ENCODE measurements at regions of chr10 and their contacts with region 1.

Region 1: DNA sequence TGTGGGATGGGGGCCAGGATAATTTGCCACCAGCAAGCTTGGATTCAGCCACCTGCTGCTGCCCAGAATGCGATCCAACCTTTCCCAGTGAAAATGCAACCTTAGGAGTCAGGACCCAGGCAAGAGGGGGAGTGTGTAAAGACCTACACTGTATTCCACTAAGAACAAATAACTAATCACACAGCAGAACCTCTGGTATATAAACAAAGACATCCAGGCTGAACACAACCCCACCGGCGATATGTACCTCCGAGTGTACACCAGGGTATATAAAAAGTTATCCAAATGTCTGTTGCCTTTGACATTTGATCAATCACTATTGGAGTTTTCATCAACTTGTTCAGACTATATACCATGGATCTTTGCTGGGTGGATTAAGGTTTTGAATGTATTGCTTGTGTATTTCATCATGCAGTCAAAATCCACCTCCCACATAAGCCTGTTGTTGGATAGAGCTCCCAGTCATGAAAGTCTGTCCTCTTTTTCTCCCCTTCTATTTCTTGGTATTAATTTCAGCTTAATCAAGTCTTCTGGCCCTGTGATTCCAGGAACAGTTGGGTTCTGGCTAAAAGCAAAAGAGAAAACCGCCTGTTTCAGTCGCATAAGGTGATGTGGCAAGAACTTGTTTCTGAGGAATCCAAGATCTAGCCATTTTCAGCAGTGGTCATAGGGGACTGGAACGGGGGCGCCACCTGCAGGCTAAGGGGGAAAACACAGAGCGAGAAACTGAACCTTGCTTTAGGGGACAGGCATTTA is 290.7 kb downstream of the CCDC3 start:
- DNase-seq: peak; percentile 64 to 76
- ATAC-seq: peak; percentile 35 to 73 (median 62)
- H3K4me3 ChIP-seq: no peak overlapping the region
- H3K27ac ChIP-seq: peak overlapping the region in 1 of 10 donors; percentile 5
- H3K4me1 ChIP-seq: peaks cover 12 to 48% (median 35%) of the 10 kb centered on the region in 9 donors
- H3K27me3 ChIP-seq: no peaks in the 10 kb centered on the region
- CTCF ChIP-seq: peak; percentile 86 to 96 (median 92)

Region 2: GRCh38 chr10:12264204-12264940 is 446.4 kb before region 1 on chr10:
- intact Hi-C with region 1: loop called (anchors 1 to 10 kb)
- DNase-seq: peak; percentile 68 to 82
- ATAC-seq: peak; percentile 80 to 96 (median 92)
- H3K4me3 ChIP-seq: peak overlapping the region in 8 of 10 donors; percentile 14 to 51 (median 42)
- H3K27ac ChIP-seq: peak overlapping the region in 3 of 10 donors; percentile 1 to 70 (median 61)
- H3K4me1 ChIP-seq: peaks cover 0 to 32% (median 0%) of the 10 kb centered on the region in 9 donors
- H3K27me3 ChIP-seq: no peaks in the 10 kb centered on the region
- CTCF ChIP-seq: peak; percentile 79 to 95 (median 92)

Region 3: GRCh38 chr10:12484941-12485805 is 225.6 kb before region 1 on chr10:
- intact Hi-C with region 1: no loop called
- DNase-seq: peak; percentile 36 to 55
- ATAC-seq: peak; percentile 78 to 92 (median 89)
- H3K4me3 ChIP-seq: peak overlapping the region in 6 of 10 donors; percentile 6 to 29 (median 25)
- H3K27ac ChIP-seq: peak overlapping the region in 8 of 10 donors; percentile 9 to 78 (median 51)
- H3K4me1 ChIP-seq: peaks cover 0 to 27% (median 12%) of the 10 kb centered on the region in 9 donors
- H3K27me3 ChIP-seq: no peaks in the 10 kb centered on the region
- CTCF ChIP-seq: peak in 3 of 9 donors; percentile 13 to 22 (median 22)

Region 4: DNA sequence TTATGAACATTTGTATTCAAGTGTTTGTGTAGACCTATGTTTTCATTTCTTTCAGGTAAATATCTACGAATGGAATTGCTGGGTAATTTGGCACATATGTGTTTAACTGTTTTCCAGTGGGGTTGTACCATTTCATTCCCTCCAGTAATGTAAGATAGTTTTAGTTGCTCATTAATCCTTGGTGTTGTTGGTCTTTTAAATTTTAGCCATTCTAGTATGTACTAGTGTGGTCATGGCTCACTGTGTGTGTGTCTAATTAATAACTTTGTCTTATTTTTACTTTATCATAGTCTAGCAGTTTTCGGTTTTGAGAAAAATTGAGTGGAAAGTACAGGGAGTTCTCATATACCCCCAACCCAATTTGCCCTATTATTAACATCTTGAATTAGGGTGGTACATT is 82.6 kb before region 1 on chr10:
- intact Hi-C with region 1: no loop called
- DNase-seq: no peak
- ATAC-seq: no peak
- H3K4me3 ChIP-seq: no peak overlapping the region
- H3K27ac ChIP-seq: no peak overlapping the region
- H3K4me1 ChIP-seq: peaks cover 0 to 3% (median 0%) of the 10 kb centered on the region in 9 donors
- H3K27me3 ChIP-seq: no peaks in the 10 kb centered on the region
- CTCF ChIP-seq: no peak

Region 5: DNA sequence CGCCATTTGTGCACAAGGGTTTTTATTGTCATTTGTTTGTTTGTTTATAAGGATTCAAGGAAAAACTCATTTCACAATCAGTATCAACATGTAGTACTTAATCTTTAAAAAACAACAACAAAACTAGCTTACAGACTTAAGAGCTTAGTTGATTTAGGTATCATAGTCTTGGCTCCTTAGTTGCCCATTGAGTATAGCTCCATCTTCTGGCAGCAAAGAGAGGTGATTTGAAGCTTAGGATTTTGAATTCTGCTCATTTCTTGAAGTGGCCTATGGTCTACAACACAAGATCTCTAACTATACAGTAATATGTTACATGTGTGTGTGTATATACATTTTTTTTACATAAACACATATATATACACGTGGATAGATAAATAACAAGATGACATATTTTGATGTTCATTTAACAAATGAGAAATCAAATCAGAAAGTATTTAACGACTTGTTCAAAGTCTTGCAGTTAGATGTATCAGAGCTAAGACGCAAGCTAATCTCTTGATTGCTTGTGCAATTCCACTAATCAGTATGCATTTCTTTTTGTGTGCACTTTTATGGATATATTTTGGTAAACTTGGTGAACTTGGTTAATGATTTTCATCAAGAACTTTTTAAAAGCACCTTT is 54.1 kb before region 1 on chr10:
- intact Hi-C with region 1: loop called in 2 of 10 experiments (anchors 5 kb)
- DNase-seq: no peak
- ATAC-seq: peak in 3 of 8 donors; percentile 34 to 55 (median 35)
- H3K4me3 ChIP-seq: no peak overlapping the region
- H3K27ac ChIP-seq: no peak overlapping the region
- H3K4me1 ChIP-seq: no peaks in the 10 kb centered on the region
- H3K27me3 ChIP-seq: no peaks in the 10 kb centered on the region
- CTCF ChIP-seq: peak; percentile 33 to 76 (median 71)

Region 6: DNA sequence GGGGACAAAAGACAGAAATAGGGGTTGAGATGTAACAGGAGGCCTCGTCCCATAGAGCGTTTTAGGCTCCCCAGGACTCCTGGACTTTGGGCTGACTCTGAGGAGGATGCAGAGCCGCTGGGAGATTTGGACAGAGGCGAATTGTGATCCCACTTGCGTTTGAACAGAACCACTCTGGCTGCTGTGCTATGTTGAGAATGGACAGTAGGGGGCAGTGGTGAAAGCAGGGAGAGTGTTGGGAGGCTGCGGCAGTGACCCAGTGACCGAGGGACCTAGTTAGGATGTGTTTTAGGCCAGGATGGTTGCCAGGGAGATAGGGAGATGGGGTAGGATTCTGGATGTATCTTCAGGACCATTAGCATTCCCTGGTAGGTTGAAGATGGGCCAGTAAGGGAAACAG is 19.1 kb after region 1 on chr10:
- intact Hi-C with region 1: no loop called
- DNase-seq: no peak
- ATAC-seq: no peak
- H3K4me3 ChIP-seq: no peak overlapping the region
- H3K27ac ChIP-seq: peak overlapping the region in 1 of 10 donors; percentile 74
- H3K4me1 ChIP-seq: peaks cover 0 to 8% (median 0%) of the 10 kb centered on the region in 9 donors
- H3K27me3 ChIP-seq: peaks cover 0 to 7% (median 0%) of the 10 kb centered on the region in 7 donors
- CTCF ChIP-seq: peak in 6 of 9 donors; percentile 13 to 35 (median 24)

Region 7: DNA sequence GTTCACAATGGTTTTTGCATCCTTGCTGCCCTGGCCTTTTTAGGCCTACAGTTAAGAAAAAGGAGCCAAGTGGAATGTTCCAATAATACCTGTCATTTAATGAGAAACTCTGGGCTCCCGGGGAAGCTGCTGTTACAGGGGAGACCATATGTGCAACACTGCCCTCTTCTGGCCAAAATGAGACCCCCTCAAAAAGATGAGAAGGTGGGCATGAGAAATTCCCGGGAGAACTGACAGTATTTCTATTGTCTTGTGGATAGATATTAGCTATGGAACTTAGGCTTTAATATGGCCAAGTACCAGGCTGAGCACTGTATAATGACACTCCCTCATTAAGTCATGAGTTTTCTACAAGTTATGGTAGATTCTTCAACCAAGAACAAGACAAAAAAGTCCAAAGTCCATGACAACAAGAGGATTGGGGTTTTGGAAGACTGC is 191.4 kb after region 1 on chr10:
- intact Hi-C with region 1: loop called in 6 of 10 experiments (anchors 5 to 10 kb)
- DNase-seq: peak in 1 of 2 donors; percentile 62
- ATAC-seq: peak in 3 of 8 donors; percentile 33 to 46 (median 34)
- H3K4me3 ChIP-seq: no peak overlapping the region
- H3K27ac ChIP-seq: no peak overlapping the region
- H3K4me1 ChIP-seq: peaks cover 0 to 9% (median 0%) of the 10 kb centered on the region in 9 donors
- H3K27me3 ChIP-seq: peaks cover 0 to 11% (median 0%) of the 10 kb centered on the region in 7 donors
- CTCF ChIP-seq: peak; percentile 54 to 88 (median 78)

Region 8: GRCh38 chr10:13074561-13075451 is 364.0 kb after region 1 on chr10:
- intact Hi-C with region 1: loop called in 5 of 10 experiments (anchors 5 to 10 kb)
- DNase-seq: peak; percentile 52 to 63
- ATAC-seq: peak in 6 of 8 donors; percentile 49 to 85 (median 77)
- H3K4me3 ChIP-seq: no peak overlapping the region
- H3K27ac ChIP-seq: no peak overlapping the region
- H3K4me1 ChIP-seq: peaks cover 0 to 5% (median 0%) of the 10 kb centered on the region in 9 donors
- H3K27me3 ChIP-seq: peaks cover 0 to 19% (median 11%) of the 10 kb centered on the region in 7 donors
- CTCF ChIP-seq: peak; percentile 46 to 91 (median 86)

Measured in heart right ventricle (tissue), 16 donors.